ENCODE measurements at regions of chr11 and their contacts with region 1.

Region 1: GRCh38 chr11:80214413-80214812 is 773.6 kb upstream of the TENM4 start:
- DNase-seq: no peak
- ATAC-seq: no peak
- H3K4me3 ChIP-seq: no peak overlapping the region
- H3K27ac ChIP-seq: no peak overlapping the region
- H3K4me1 ChIP-seq: no peaks in the 10 kb centered on the region
- H3K27me3 ChIP-seq: no peaks in the 10 kb centered on the region
- CTCF ChIP-seq: no peak
- POLR2A ChIP-seq: no peak

Region 2: DNA sequence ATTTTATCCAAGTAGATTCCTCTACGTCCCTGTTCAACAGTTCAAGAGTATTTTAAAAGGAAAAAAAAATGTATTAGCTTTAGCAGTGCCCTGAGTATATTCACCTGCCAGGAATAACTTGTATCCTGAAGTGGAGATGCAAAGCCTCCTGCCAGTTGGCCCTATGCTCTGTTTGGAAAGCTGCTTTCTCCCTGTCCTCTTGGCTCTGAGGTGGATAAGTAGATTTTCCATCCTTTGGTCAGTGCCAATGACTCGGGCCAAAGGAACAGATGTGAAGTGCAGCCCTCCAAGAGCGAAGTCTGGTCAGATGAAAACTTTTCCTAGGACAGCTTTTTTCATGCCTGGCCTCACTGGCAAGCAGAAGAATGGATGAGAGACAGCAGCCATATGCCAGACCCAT is 66.3 kb after region 1 on chr11:
- intact Hi-C with region 1: loop called in 1 of 2 experiments (anchors 10 kb)
- DNase-seq: no peak
- ATAC-seq: no peak
- H3K4me3 ChIP-seq: no peak overlapping the region
- H3K27ac ChIP-seq: no peak overlapping the region
- H3K4me1 ChIP-seq: no peaks in the 10 kb centered on the region
- H3K27me3 ChIP-seq: no peaks in the 10 kb centered on the region
- CTCF ChIP-seq: no peak
- POLR2A ChIP-seq: no peak